Aorta (tissue), 5 donors: ENCODE measurements at regions of chr3 and their contacts with region 1.

Region 1: DNA sequence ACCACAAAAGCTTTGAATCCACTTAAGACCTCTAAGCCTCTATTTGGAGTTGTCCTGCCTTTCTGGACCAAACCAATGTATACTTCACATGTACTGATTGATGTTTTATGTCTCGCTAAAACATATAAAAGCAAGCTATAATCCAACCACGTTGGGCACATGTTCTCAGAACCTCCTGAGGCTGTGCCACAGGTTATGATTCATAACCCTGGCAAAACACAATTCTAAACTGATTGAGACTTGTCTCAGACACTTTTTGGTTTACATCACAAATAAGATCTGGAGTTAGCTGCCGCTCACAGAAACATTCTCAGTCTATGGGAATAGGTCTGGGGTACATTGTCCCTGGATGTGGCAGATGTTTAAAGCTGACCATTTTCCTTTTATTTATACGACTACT is 53.4 kb upstream of the EPHA6 start:
- DNase-seq: no peak
- ATAC-seq: no peak
- H3K4me3 ChIP-seq: no peak overlapping the region
- H3K27ac ChIP-seq: no peak overlapping the region
- H3K4me1 ChIP-seq: no peaks in the 10 kb centered on the region
- H3K27me3 ChIP-seq: no peaks in the 10 kb centered on the region

Region 2: DNA sequence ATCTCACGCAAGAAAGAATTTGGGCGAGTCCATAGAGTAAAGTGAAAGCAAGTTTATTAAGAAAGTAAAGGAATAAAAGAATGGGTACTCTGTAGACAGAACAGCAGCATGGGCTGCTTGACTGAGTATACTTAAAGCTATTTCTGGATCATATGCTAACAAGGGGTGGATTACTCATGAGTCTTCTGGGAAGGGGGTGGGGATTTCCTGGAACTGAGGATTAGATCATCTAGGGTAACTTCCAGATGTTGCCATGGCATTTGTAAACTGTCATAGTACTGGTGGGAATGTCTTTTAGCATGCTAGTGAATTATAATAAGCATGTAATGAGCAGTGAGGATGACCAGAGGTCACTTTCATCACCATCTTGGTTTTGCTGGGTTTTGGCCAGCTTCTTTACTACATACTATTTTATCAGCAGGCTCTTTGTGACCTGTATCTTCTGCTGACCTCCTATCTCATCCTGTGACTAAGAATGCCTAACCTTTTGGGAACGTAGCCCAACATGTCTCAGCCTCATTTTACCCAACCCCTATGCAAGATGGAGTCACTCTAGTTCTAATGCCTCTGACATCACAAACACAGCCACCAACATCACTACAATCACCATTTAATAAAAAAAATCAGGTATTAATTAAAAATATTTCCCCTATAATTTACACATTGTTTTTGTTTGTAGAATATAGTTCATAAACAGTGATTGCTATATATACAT is 837.3 kb before region 1 on chr3:
- intact Hi-C with region 1: no loop called
- DNase-seq: peak in 1 of 2 donors; percentile 53
- ATAC-seq: peak; percentile 88
- H3K4me3 ChIP-seq: no peak overlapping the region
- H3K27ac ChIP-seq: peak overlapping the region in 1 of 2 donors; percentile 51
- H3K4me1 ChIP-seq: peaks cover 0 to 2% of the 10 kb centered on the region in 2 donors
- H3K27me3 ChIP-seq: no peaks in the 10 kb centered on the region

Region 3: GRCh38 chr3:96700322-96701315 is 60.3 kb before region 1 on chr3:
- intact Hi-C with region 1: loop called in 1 of 2 experiments (anchors 10 kb)
- DNase-seq: no peak
- ATAC-seq: no peak
- H3K4me3 ChIP-seq: no peak overlapping the region
- H3K27ac ChIP-seq: no peak overlapping the region
- H3K4me1 ChIP-seq: no peaks in the 10 kb centered on the region
- H3K27me3 ChIP-seq: no peaks in the 10 kb centered on the region